ENCODE measurements at regions of chr9 and their contacts with region 1.

Region 1: GRCh38 chr9:4353236-4353635 is 53.4 kb upstream of the GLIS3 start:
- DNase-seq: no peak
- H3K4me3 ChIP-seq: no peak overlapping the region
- H3K27ac ChIP-seq: no peak overlapping the region
- H3K4me1 ChIP-seq: no peaks in the 10 kb centered on the region
- H3K27me3 ChIP-seq: no peaks in the 10 kb centered on the region
- CTCF ChIP-seq: no peak

Region 2: GRCh38 chr9:4277531-4277991 is 75.7 kb before region 1 on chr9:
- CTCF ChIA-PET with region 1: no interaction called
- POLR2A ChIA-PET with region 1: no interaction called
- intact Hi-C with region 1: no loop called
- DNase-seq: peak; percentile 79
- H3K4me3 ChIP-seq: no peak overlapping the region
- H3K27ac ChIP-seq: no peak overlapping the region
- H3K4me1 ChIP-seq: peaks cover 15% of the 10 kb centered on the region
- H3K27me3 ChIP-seq: peaks cover 40% of the 10 kb centered on the region
- CTCF ChIP-seq: no peak

Region 3: DNA sequence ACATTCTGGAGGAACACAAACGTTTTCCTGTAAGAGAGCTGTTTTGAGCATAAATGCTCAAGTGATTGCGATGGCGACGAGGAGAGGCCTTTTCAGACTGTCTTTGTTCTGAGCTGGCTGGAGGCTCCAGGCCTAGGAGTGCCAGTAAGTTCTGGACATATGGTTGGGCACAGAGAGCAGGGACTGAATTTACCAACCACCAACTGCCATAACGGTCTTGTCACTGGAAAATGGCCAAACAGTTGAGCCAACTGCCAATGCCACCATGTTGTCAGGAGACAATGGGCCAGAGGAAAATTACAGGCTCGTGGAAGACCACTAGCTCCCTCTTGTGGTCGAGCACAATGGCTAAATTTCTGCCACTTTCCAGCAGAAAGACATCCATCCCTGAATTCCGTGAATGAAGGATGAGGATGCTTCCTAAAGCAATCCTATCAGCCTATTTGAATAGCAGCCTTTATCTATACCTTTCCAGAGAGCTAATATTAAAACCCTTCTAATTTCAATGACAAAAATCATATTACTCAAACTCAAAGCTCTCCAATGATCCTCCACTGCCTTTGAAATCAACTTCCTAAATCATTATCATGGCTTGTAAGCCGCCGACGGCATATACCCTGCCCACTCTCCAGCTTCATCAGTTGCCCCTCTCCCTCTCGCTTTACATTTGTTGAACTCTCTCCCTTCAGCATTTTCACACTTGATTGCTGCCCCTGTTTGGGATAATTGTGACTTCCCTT is 13.5 kb after region 1 on chr9:
- CTCF ChIA-PET with region 1: no interaction called
- POLR2A ChIA-PET with region 1: no interaction called
- intact Hi-C with region 1: no loop called
- DNase-seq: peak; percentile 65
- H3K4me3 ChIP-seq: no peak overlapping the region
- H3K27ac ChIP-seq: no peak overlapping the region
- H3K4me1 ChIP-seq: no peaks in the 10 kb centered on the region
- H3K27me3 ChIP-seq: no peaks in the 10 kb centered on the region
- CTCF ChIP-seq: peak; percentile 76

Region 4: GRCh38 chr9:4413856-4414455 is 60.7 kb after region 1 on chr9:
- CTCF ChIA-PET with region 1: no interaction called
- POLR2A ChIA-PET with region 1: no interaction called
- intact Hi-C with region 1: no loop called
- DNase-seq: no peak
- H3K4me3 ChIP-seq: no peak overlapping the region
- H3K27ac ChIP-seq: no peak overlapping the region
- H3K4me1 ChIP-seq: no peaks in the 10 kb centered on the region
- H3K27me3 ChIP-seq: no peaks in the 10 kb centered on the region
- CTCF ChIP-seq: no peak

Region 5: DNA sequence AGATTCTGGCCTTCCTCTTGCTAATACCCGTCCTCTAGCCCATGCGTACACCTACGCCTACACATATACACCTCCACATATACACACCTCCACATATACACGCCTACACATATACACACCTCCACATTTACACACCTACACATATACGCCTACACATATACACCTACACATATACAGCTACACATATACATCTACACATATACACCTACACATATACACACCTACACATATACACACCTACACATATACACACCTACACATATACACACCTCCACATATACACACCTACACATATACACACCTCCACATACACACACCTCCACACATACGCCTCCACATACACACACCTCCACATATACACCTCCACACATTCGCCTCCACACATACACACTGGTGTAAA is 360.6 kb after region 1 on chr9:
- CTCF ChIA-PET with region 1: no interaction called
- POLR2A ChIA-PET with region 1: no interaction called
- intact Hi-C with region 1: no loop called
- DNase-seq: no peak
- H3K4me3 ChIP-seq: no peak overlapping the region
- H3K27ac ChIP-seq: no peak overlapping the region
- H3K4me1 ChIP-seq: peaks cover 6% of the 10 kb centered on the region
- H3K27me3 ChIP-seq: no peaks in the 10 kb centered on the region
- CTCF ChIP-seq: no peak

Region 6: DNA sequence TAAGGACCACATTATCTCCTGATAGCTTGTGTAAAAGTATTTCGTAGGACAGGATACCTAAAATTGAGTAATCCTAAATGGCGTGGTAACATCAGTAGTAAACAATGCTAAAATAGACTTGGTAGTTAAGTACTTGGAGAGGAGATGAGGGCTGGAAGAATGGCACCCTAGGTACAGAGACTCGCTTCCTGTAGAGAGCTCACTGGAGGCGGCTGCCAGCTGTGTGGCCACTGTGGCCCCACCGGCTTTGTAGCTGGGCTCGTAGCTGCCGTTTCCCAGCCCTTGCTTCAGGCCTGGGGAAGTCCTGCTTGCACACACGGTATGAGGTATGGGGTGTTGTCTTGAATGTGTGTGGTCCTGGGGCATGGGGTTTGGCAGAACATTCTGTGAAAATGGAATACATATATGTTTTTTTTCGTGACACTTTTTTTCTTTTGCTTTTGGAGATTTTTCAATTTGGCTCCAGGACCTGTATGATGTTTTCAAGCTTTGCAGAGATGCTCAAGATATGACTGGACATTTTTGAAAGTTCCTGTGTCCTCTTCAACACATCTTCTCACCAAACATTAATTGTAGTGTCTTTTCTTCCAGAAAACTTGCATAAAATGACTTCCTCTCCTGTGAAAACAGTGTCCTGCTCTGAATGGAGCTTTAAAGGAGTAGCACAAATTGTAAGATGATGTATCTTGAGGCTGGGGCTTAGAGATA is 497.5 kb after region 1 on chr9:
- CTCF ChIA-PET with region 1: no interaction called
- POLR2A ChIA-PET with region 1: interaction called, 12 read pairs
- intact Hi-C with region 1: no loop called
- DNase-seq: peak; percentile 18
- H3K4me3 ChIP-seq: no peak overlapping the region
- H3K27ac ChIP-seq: no peak overlapping the region
- H3K4me1 ChIP-seq: peaks cover 9% of the 10 kb centered on the region
- H3K27me3 ChIP-seq: no peaks in the 10 kb centered on the region
- CTCF ChIP-seq: no peak